Activated CD4-positive, alpha-beta T cell treated with anti-CD3 and anti-CD28 coated beads, Interleukin-2, amount 10 ng/mL, durations not matched to agents 24 days and 14 days (primary cell): ENCODE measurements at regions of chr5 and their contacts with region 1.

Region 1: DNA sequence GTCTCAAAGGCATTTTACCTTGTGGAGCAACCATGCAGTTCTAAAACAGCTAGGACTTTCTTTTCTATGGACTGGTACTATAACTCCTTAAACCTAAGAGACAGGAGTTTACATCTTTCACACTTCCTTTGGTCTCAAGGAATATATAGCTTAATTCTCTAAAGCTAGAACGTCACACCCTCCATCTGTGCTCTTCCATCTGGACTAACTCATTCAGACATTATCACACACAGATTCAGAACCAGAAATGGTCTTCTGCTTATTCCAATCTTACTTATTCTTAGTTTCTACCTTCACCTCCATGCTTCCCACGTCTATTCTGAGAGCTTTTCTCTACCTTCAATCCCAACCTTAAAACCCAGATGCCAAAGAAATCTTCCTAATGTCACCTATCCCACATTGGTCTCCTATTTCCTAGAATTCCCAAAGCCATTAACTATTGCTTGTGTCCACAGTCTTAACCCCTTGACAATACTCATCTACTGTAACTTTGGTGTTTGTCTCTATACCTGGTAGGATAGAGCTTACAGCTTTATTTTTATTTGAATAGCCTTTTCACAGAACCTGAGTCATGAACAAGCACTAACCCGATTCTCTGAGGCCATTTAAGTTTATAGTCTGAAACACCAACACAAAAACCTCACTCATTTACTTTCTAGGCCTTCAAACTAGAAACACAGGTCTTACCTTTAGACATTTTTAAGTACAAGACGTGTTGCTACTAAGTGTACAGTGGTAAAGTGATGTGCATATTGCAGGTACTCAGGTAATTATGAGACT is 22.8 kb downstream of the CSNK1A1 start:
- DNase-seq: no peak
- H3K4me3 Mint-ChIP-seq: no peak overlapping the region
- H3K27ac Mint-ChIP-seq: no peak overlapping the region
- H3K4me1 Mint-ChIP-seq: peaks cover 45% of the 10 kb centered on the region
- H3K27me3 Mint-ChIP-seq: no peaks in the 10 kb centered on the region

Region 2: DNA sequence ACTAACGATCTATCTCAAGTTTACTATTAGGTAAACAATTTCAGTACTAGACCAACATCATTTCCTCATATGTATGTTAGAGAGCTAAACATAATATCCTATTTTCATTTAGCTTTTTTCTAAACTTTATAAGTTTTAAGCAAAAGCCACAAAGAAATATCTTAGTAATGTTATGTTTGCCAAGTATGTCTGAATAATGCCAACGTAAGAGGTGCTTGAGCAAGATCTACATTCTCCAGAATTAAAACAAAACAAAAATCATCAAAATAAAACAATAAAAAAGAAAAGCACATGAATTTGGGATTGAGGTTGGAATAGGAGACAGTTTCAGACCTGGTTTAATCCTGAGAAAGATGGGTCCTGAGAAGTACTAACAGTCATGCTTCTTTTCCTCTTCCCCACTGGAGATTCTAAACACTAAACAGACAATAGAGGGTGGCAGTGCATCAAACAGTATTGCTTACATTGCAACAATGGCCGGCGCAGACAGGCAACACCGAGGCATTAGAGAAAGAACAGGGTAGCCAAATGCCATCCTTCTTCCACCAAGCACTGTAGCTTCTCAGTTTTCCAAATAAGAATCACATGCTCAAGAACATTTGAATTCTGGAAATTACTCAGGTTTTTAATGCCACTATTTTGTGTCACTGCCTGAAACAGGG is 10.9 kb before region 1 on chr5:
- intact Hi-C with region 1: loop called (anchors 2 kb)
- DNase-seq: no peak
- H3K4me3 Mint-ChIP-seq: no peak overlapping the region
- H3K27ac Mint-ChIP-seq: no peak overlapping the region
- H3K4me1 Mint-ChIP-seq: peaks cover 32% of the 10 kb centered on the region
- H3K27me3 Mint-ChIP-seq: no peaks in the 10 kb centered on the region

Region 3: GRCh38 chr5:149740866-149741459 is 212.5 kb after region 1 on chr5:
- intact Hi-C with region 1: no loop called
- DNase-seq: no peak
- H3K4me3 Mint-ChIP-seq: no peak overlapping the region
- H3K27ac Mint-ChIP-seq: no peak overlapping the region
- H3K4me1 Mint-ChIP-seq: no peaks in the 10 kb centered on the region
- H3K27me3 Mint-ChIP-seq: no peaks in the 10 kb centered on the region

Region 4: GRCh38 chr5:149759986-149760853 is 231.7 kb after region 1 on chr5:
- intact Hi-C with region 1: no loop called
- DNase-seq: no peak
- H3K4me3 Mint-ChIP-seq: no peak overlapping the region
- H3K27ac Mint-ChIP-seq: no peak overlapping the region
- H3K4me1 Mint-ChIP-seq: peaks cover 4% of the 10 kb centered on the region
- H3K27me3 Mint-ChIP-seq: no peaks in the 10 kb centered on the region